ENCODE measurements at regions of chr7 and their contacts with region 1.

Region 1: GRCh38 chr7:41977151-41977651 is 259.8 kb downstream of the GLI3 start:
- DNase-seq: peak; percentile 28 to 53
- ATAC-seq: peak; percentile 65 to 80; a peak in 3 of 6 replicates
- H3K4me3 ChIP-seq: no peak overlapping the region
- H3K27ac ChIP-seq: no peak overlapping the region
- H3K4me1 ChIP-seq: no peaks in the 10 kb centered on the region
- CTCF ChIP-seq: peak; percentile 65
- EP300 ChIP-seq: no peak
- POLR2A ChIP-seq: no peak
- RAD21 ChIP-seq: peak; percentile 64; a peak in 4 of 5 replicates

Region 2: GRCh38 chr7:41967156-41967555 is 10.0 kb before region 1 on chr7:
- CTCF ChIA-PET with region 1: interaction called, 11 read pairs
- POLR2A ChIA-PET with region 1: no interaction called
- DNase-seq: no peak
- ATAC-seq: no peak
- H3K4me3 ChIP-seq: no peak overlapping the region
- H3K27ac ChIP-seq: no peak overlapping the region
- H3K4me1 ChIP-seq: no peaks in the 10 kb centered on the region
- CTCF ChIP-seq: no peak
- EP300 ChIP-seq: no peak
- POLR2A ChIP-seq: no peak
- RAD21 ChIP-seq: no peak

Region 3: DNA sequence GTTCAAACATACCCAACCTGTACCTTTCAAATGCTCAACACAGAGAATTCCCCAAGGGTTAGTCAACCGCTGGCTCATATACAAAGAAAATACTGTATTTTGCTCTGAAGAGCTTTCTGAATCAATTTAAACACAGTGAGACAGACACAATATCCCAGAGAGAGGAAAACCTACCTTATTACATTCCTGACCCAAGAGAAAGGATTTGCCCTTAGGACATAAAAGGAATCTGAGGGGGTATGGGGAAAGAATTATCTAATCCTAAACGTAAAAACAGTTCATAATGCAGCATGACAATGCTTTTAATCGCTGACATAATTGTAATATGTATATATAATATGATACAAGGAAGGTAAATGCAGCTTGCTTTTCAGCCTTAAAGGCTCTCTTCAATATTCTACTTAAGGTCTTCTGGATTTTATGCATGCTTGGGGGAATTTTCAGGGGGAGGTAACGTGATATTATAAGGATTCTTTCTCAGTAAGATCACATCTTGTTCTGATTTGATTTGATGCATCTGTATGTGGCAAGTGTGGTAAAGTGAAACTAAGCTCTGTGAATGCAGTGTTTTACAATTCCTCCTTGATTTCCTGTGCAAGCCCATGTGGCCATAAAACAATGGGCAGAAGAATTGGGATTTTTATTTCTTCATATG is 19.3 kb after region 1 on chr7:
- CTCF ChIA-PET with region 1: interaction called, 16 read pairs
- POLR2A ChIA-PET with region 1: no interaction called
- DNase-seq: no peak
- ATAC-seq: no peak
- H3K4me3 ChIP-seq: no peak overlapping the region
- H3K27ac ChIP-seq: no peak overlapping the region
- H3K4me1 ChIP-seq: no peaks in the 10 kb centered on the region
- CTCF ChIP-seq: no peak
- EP300 ChIP-seq: no peak
- POLR2A ChIP-seq: no peak
- RAD21 ChIP-seq: no peak

Region 4: GRCh38 chr7:42690794-42691639 is 713.8 kb after region 1 on chr7:
- CTCF ChIA-PET with region 1: interaction called, 32 read pairs
- POLR2A ChIA-PET with region 1: no interaction called
- DNase-seq: peak; percentile 6 to 34
- ATAC-seq: peak; percentile 82 to 87
- H3K4me3 ChIP-seq: no peak overlapping the region
- H3K27ac ChIP-seq: no peak overlapping the region
- H3K4me1 ChIP-seq: no peaks in the 10 kb centered on the region
- CTCF ChIP-seq: peak; percentile 32; the same call in 2 of the 3 replicates
- EP300 ChIP-seq: no peak
- POLR2A ChIP-seq: no peak
- RAD21 ChIP-seq: peak; percentile 43 to 66

Region 5: DNA sequence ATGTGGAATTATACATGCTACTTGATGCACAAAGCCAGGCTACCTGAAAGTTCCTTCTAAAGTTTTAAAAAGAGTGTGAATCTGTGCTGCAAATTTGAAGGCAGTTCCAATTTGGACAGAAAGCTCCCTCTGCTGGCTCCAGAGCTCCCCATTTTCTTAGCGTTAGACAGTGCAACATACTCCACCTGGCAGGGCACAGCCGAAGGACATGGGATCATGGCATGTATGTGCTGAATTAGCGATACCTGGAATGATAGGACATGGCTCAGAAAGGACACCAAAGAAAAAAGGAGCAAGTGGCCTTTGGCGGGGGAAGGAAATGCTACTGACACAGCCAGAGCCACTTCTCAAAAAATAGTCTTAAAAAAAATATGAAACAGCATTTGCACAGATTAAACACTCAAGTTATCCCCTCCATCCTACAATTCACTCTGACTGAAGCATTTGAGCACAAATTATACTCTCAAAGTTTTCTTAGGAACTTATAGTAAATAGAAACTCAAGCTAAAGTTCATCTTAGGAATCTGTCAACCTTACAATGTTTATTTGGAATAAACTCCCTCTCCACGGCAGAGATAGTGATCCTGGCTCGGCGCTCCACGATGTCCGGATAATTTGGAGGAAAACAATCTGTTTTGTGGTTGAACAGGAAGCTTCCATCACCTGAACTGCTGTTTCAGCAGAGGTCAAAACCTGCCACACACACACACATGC is 854.7 kb after region 1 on chr7:
- CTCF ChIA-PET with region 1: interaction called, 11 read pairs
- POLR2A ChIA-PET with region 1: no interaction called
- DNase-seq: peak in 1 of 2 experiments; percentile 30
- ATAC-seq: peak; percentile 84 to 89; a peak in 5 of 6 replicates
- H3K4me3 ChIP-seq: no peak overlapping the region
- H3K27ac ChIP-seq: no peak overlapping the region
- H3K4me1 ChIP-seq: no peaks in the 10 kb centered on the region
- CTCF ChIP-seq: peak; percentile 47
- EP300 ChIP-seq: no peak
- POLR2A ChIP-seq: no peak
- RAD21 ChIP-seq: peak; percentile 53 to 56

Region 6: DNA sequence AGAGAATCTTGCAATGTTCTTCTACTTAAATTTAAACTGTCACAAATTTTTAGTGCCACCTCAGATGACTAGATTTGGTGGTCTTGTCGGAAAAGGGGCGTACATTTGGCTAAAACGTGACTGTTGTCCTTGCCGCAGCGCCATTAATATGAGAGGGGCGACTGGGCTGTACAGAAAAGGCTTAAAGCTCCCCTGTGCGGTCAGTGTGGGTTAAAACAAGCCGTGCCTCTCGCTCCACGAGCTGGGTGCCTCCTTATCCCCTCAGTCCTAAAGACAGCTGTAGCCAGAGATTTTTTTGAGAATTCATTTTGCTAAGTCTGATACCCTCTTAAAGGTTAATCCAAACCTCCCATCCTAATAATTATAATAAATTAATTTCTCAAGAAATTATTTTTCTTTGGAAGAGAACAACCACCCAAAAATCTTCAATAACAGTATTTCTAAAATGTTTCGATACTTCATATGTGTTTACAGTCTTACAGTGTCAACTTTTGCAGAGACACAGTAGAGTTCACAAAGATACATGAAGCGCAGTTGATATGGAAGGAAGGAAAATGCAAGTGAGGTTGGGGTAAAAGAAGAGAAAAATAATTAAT is 866.1 kb after region 1 on chr7:
- CTCF ChIA-PET with region 1: interaction called, 19 read pairs
- POLR2A ChIA-PET with region 1: no interaction called
- DNase-seq: peak; percentile 36 to 51
- ATAC-seq: peak; percentile 91 to 97
- H3K4me3 ChIP-seq: no peak overlapping the region
- H3K27ac ChIP-seq: no peak overlapping the region
- H3K4me1 ChIP-seq: no peaks in the 10 kb centered on the region
- CTCF ChIP-seq: peak; percentile 52
- EP300 ChIP-seq: no peak
- POLR2A ChIP-seq: no peak
- RAD21 ChIP-seq: peak; percentile 72 to 73

Region 7: DNA sequence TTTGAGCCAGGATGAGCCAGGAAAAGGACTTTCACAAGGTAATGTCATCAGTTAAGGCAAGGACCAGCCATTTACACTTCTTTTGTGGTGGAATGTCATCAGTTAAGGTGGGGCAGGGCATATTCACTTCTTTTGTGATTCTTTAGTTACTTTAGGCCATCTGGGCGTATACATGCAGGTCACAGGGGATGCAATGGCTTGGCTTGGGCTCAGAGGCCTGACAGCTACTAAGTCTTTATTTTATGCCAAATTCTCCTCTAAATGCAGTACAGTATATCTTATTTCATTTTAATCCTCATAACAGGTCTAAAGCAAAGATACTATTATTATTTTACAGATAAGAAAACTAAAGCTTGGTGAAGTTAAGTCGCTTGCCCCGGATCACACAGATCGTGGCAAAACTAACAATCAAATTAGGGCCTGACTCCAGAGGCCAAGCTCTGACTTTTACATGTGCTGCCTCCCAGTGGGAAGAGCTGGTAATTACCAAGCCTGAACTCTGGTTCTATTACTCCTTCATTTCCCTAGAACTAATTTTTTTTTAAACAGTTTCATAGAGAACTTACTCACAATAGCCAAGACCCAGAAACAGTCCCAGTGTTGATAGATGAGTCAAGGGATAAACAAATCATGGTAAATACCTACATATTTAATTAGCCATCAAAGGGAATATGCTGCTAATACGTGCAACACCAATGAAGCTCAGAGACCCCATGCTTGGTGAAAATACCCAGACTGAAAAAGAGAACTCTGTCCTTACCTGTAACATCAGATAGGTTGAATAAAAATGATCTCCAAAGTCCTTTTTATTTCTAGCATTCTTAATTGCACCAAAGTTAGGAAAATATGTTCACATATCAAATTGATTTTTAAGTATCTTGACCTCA is 899.2 kb after region 1 on chr7:
- CTCF ChIA-PET with region 1: interaction called, 10 read pairs
- POLR2A ChIA-PET with region 1: no interaction called
- DNase-seq: peak in 1 of 2 experiments; percentile 58
- ATAC-seq: peak; percentile 70 to 93; a peak in 5 of 6 replicates
- H3K4me3 ChIP-seq: no peak overlapping the region
- H3K27ac ChIP-seq: no peak overlapping the region
- H3K4me1 ChIP-seq: no peaks in the 10 kb centered on the region
- CTCF ChIP-seq: peak; percentile 76
- EP300 ChIP-seq: no peak
- POLR2A ChIP-seq: no peak
- RAD21 ChIP-seq: peak; percentile 59 to 68